ENCODE measurements at regions of chr1 and their contacts with region 1.

Region 1: DNA sequence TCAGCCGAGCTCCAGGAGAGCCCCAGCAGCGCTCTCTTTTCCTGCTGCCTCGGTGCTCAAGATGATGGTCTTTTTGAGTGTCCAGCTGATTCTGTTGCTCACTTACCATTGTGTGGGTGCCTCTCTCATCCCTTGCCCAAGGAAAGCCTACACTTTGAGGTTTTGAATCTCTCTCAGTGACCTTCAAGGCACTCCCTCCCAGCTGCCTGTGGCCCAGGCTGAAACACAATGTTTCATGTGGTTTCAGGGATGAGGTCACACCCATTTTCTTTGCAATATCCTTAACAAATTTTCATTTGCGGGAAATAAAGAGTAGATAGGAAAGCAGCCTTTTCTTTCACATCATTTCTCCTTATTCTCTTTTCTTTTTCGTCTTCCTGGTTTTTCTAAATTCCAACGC is 12.6 kb upstream of the MRPS14 start:
- DNase-seq: no peak

Region 2: GRCh38 chr1:173733912-173734311 is 1302.0 kb before region 1 on chr1:
- intact Hi-C with region 1: no loop called
- DNase-seq: no peak

Region 3: GRCh38 chr1:175129997-175130648 is 94.3 kb after region 1 on chr1:
- intact Hi-C with region 1: loop called (anchors 5 to 10 kb)
- DNase-seq: no peak

Region 4: GRCh38 chr1:175319418-175320230 is 283.8 kb after region 1 on chr1:
- intact Hi-C with region 1: loop called in 1 of 2 experiments (anchors 10 kb)
- DNase-seq: peak; percentile 90

Region 5: DNA sequence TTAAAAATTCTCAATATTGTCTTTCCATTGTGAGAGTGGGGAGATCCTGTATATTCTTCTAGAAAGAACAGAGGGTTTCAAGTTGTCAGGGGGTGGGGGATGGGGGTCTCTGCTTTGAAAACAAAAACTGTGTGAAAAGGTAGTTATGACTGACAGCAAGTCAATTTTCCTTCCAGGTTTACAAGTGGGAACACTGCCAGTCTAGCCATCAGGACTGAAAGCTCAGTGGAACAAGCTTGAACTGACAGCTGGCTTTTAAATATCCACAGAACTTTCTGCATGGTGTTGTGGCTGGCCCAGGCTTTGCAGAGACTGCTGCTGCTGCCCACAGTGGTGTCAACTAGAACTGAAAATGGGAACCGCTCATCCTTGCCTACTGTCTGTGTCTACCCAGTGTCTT is 545.0 kb after region 1 on chr1:
- intact Hi-C with region 1: loop called in 1 of 2 experiments (anchors 5 kb)
- DNase-seq: no peak